Activated CD4-positive, alpha-beta T cell treated with anti-CD3 and anti-CD28 coated beads for 36 hours (primary cell): ENCODE measurements at regions of chr22 and their contacts with region 1.

Region 1: GRCh38 chr22:43088979-43089717 is at the start of gene TTLL1:
- DNase-seq: peak; percentile 96
- ATAC-seq: peak; percentile 95
- H3K4me3 Mint-ChIP-seq: peak within 1 kb of the TSS; percentile 84
- H3K27ac Mint-ChIP-seq: peak within 1 kb of the TSS; percentile 94
- H3K4me1 Mint-ChIP-seq: peaks cover 21% of the 10 kb centered on the region
- H3K27me3 Mint-ChIP-seq: no peaks in the 10 kb centered on the region
- total RNA-seq, gene TTLL1: 5.7 to 6.6 TPM

Region 2: DNA sequence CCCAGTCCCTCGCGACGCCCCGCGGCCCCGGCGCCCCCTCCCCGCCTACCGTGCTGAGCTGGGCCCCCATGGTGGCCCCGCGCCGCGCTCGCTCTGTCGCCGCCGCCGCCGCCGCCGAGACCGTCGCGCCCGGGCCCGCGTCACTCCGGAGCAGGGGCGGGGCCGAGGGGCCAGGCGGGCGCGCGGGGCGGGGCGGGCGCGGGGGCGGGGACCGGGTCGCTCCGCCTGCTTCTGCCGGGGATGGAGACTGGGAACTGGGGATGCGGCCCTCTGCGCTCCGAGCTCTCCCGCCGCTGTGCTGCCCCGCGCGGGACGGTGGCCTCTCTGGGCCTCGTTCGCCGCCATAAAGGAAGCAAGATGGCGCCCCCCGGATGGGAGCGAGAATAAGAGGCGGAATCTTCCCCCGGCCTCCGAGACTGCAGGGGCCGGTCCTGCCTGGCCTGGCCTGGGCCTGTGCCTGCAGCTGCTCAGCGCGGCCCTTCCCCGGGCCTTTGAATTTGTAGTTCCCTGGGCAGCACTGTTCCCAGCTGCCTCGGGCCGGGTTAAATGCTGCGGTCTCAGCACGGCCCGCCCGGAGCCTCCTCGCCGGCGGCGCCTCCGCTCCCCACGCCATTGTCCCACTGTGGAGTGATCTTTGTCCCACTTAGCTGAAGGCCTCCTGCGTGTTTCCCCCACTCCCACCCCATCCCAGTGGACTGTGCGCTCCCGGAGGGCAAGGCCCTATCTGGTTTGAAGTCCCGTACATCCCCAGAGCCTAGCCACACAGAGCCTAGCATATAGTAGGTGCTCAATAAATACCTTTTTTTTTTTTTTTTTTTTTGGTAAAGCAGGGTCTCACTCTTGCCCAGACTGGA is 439.7 kb before region 1 on chr22 and contains the start of gene CYB5R3:
- CTCF ChIA-PET with region 1: no interaction called
- POLR2A ChIA-PET with region 1: no interaction called
- intact Hi-C with region 1: loop called in 1 of 2 experiments (anchors 1 kb)
- DNase-seq: peak; percentile 91
- ATAC-seq: peak; percentile 87
- H3K4me3 Mint-ChIP-seq: peak within 1 kb of the TSS; percentile 92
- H3K27ac Mint-ChIP-seq: peak within 1 kb of the TSS; percentile 92
- H3K4me1 Mint-ChIP-seq: peaks cover 22% of the 10 kb centered on the region
- H3K27me3 Mint-ChIP-seq: no peaks in the 10 kb centered on the region
- total RNA-seq, gene CYB5R3: 79.5 to 101 TPM

Region 3: DNA sequence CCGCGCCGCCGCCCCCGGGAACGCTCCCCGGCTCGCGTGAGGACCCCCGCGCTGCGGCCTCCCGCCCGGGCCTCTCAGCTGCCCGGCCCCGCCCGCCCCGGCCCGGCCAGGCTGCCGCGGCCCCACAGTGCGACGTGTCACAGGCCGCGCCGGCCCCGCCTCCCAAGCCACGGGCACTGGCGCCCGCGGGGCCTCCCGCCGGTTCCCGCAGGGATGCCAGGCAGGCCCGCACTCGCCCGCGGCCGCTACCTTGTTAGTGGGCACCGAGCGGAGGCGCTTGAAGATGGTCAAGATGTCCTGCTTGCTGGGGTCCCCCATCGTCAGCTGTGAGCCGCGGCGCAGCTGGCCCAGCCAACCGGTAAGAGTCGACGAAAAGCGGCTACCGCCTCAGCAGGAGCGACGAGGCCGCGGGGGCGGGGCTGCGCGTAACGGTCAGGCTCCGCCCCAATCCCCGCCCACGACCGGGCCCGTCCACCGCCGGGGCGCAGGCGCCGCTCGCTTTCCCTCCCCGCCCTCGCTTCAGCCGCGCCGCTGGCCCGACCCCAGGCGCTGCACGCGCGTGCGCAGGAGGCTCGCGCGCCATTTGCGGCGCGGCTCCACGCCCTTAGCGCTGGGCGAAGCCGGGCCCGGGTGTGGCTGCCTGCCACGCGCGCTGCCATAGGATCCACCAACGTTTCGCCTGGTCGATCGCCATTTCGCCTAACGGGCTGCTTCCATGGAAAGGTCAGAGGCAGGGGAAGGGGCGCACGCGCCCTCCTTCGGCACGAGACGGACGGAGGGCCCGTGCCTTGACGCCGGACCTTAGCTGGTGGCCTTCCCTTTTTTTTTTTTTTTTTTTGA is 232.1 kb before region 1 on chr22 and contains the start of gene ARFGAP3:
- CTCF ChIA-PET with region 1: no interaction called
- POLR2A ChIA-PET with region 1: no interaction called
- intact Hi-C with region 1: loop called (anchors 1 to 10 kb)
- DNase-seq: peak; percentile 98
- ATAC-seq: peak; percentile 91
- H3K4me3 Mint-ChIP-seq: peak within 1 kb of the TSS; percentile 83
- H3K27ac Mint-ChIP-seq: peak within 1 kb of the TSS; percentile 85
- H3K4me1 Mint-ChIP-seq: peaks cover 11% of the 10 kb centered on the region
- H3K27me3 Mint-ChIP-seq: peaks cover 6% of the 10 kb centered on the region
- total RNA-seq, gene ARFGAP3: 22.5 to 23.0 TPM

Region 4: DNA sequence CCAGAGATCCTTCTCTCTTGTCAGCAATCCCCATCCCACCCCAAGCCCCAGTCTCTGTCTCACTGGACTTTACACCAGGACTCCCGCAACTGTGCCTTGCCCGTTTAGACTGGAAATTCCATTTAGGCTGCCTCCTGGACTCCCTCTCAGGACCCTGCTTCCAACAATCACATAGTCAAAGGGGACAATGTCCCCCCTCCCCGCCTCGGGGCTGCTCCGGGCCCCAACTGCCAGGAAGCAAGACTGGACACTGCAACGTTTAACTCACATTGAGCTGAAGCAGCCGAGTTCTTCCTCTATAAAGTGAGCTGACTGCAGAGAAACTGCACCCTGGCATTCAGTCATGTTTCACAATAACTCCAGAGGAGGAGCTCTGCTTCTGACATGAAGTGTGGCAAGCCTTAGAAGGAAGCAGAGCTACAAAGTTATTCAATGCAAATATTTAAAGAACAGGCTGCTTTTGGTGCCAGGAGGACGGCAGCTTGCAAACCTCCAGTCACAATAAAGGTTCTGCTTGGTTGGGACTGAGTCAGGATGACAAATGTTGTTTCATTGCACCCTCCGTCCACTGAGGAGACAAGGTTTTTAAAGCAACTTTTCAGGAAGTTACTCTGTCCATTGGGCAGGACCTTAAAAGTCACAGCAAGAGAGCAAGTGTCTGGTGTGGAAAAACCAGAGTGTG is 94.1 kb before region 1 on chr22:
- CTCF ChIA-PET with region 1: no interaction called
- POLR2A ChIA-PET with region 1: no interaction called
- intact Hi-C with region 1: no loop called
- DNase-seq: no peak
- ATAC-seq: no peak
- H3K4me3 Mint-ChIP-seq: no peak overlapping the region
- H3K27ac Mint-ChIP-seq: no peak overlapping the region
- H3K4me1 Mint-ChIP-seq: peaks cover 47% of the 10 kb centered on the region
- H3K27me3 Mint-ChIP-seq: no peaks in the 10 kb centered on the region

Region 5: GRCh38 chr22:43014869-43015676 is 74.1 kb before region 1 on chr22 and contains the start of gene PACSIN2:
- CTCF ChIA-PET with region 1: no interaction called
- POLR2A ChIA-PET with region 1: no interaction called
- intact Hi-C with region 1: loop called in 1 of 2 experiments (anchors 1 kb)
- DNase-seq: peak; percentile 99
- ATAC-seq: peak; percentile 100
- H3K4me3 Mint-ChIP-seq: peak within 1 kb of the TSS; percentile 90
- H3K27ac Mint-ChIP-seq: peak within 1 kb of the TSS; percentile 82
- H3K4me1 Mint-ChIP-seq: peaks cover 21% of the 10 kb centered on the region
- H3K27me3 Mint-ChIP-seq: no peaks in the 10 kb centered on the region
- total RNA-seq, gene PACSIN2: 27.9 to 28.1 TPM

Region 6: DNA sequence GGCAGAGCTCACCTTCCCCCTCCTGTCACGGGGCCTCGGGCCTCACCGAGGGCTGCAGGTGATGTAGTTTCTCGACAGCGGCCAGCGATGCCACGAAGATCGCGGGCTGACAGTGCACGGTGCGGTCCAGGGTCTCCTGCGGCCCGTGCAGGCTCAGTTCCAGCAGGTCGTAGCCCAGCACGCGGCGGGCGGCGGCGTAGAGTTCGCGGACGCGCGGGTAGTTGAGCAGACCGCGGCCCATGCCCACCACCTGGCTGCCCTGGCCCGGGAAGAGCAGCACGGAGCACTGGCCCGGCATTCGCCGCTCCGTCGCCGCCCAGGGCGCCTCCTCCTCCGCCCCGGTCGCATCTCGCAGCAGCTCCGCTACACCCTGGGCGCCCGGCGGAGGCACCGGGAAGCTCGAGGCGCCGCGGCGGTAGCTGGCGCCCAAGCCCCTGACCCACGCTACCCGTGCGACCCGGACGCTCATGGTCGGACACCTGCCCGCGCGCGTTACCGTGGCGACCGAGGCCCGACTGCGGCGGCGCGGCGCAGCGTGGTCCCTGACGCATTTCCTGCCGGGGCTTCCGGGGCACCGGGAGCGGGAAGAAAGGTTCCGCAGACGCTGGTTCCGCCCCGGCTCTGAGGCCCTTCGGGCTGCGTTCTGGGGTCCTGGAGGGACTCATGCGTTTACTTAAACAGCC is 53.9 kb after region 1 on chr22 and contains the start of gene MCAT:
- CTCF ChIA-PET with region 1: no interaction called
- POLR2A ChIA-PET with region 1: no interaction called
- intact Hi-C with region 1: loop called in 1 of 2 experiments (anchors 1 kb)
- DNase-seq: peak; percentile 88
- ATAC-seq: peak; percentile 93
- H3K4me3 Mint-ChIP-seq: peak within 1 kb of the TSS; percentile 85
- H3K27ac Mint-ChIP-seq: peak within 1 kb of the TSS; percentile 95
- H3K4me1 Mint-ChIP-seq: peaks cover 27% of the 10 kb centered on the region
- H3K27me3 Mint-ChIP-seq: no peaks in the 10 kb centered on the region
- total RNA-seq, gene MCAT: 13.8 to 16.9 TPM